ENCODE measurements at regions of chr12 and their contacts with region 1.

Region 1: DNA sequence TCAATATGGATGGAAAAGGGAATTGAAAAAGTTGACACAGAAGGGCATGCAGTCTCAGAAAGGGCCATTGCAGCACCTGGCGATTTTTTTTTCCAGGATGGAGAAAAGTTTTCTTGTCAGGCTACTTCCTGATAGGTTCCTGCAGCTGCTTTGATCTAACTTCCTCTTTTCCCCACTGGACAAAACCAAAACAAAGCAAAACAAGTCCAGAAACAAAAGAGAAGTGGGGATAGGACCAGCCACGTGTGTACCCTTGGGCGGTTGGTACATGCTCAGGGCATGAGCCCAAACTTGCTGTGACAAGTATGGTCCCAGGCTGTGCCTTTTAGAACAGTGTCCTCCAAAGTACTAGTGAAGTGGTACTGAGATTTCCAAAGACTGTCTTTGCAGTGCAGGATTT is 89.8 kb downstream of the CHST11 start:
- DNase-seq: peak; percentile 65
- H3K4me3 ChIP-seq: peak overlapping the region in 2 of 3 experiments; percentile 2 to 3
- H3K27ac ChIP-seq: no peak overlapping the region
- H3K4me1 ChIP-seq: peaks cover 24% of the 10 kb centered on the region
- H3K27me3 ChIP-seq: no peaks in the 10 kb centered on the region
- CTCF ChIP-seq: no peak

Region 2: GRCh38 chr12:104582739-104583138 is 36.2 kb after region 1 on chr12:
- CTCF ChIA-PET with region 1: no interaction called
- dilution Hi-C with region 1: no loop called
- in situ Hi-C with region 1: no loop called
- intact Hi-C with region 1: no loop called
- DNase-seq: no peak
- H3K4me3 ChIP-seq: no peak overlapping the region
- H3K27ac ChIP-seq: no peak overlapping the region
- H3K4me1 ChIP-seq: peaks cover 20% of the 10 kb centered on the region
- H3K27me3 ChIP-seq: no peaks in the 10 kb centered on the region
- CTCF ChIP-seq: no peak

Region 3: DNA sequence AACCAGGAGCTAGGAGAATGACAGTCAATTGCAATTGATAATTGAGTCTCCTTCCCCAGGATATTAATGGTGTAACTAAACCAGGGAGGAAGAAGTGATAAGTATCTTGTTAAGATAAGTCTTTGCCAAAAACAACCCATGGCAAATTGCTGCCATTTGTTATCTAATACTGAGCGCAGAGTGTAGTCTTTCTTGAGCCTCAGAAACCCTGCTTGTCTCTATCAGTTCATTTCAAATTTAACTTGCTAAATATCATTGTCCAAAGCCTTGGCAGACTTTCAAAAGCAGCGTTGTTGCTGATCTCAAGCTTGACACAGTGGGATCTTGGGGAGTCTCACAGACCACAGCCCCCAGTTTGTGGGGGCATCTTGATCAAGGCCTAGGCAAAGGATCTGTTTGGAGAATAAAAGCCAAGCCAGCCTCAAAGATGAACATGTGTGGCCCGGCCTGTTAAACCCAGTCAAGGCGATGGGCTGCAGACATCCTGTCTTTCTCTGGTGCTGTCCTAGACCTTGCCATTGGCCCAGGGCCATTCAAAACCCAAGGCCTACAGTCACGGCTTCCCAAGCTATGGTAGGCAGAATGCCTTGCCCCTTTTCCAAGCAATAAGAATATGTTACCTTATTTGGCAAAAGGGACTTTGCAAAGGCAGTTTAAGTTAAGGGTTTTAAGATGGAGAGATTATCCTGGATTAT is 74.4 kb after region 1 on chr12:
- CTCF ChIA-PET with region 1: no interaction called
- dilution Hi-C with region 1: loop called (anchors 5 kb)
- in situ Hi-C with region 1: no loop called
- intact Hi-C with region 1: no loop called
- DNase-seq: no peak
- H3K4me3 ChIP-seq: no peak overlapping the region
- H3K27ac ChIP-seq: no peak overlapping the region
- H3K4me1 ChIP-seq: peaks cover 2% of the 10 kb centered on the region
- H3K27me3 ChIP-seq: no peaks in the 10 kb centered on the region
- CTCF ChIP-seq: no peak

Region 4: GRCh38 chr12:104699489-104700190 is 153.1 kb after region 1 on chr12:
- CTCF ChIA-PET with region 1: no interaction called
- dilution Hi-C with region 1: no loop called
- in situ Hi-C with region 1: no loop called
- intact Hi-C with region 1: no loop called
- DNase-seq: no peak
- H3K4me3 ChIP-seq: no peak overlapping the region
- H3K27ac ChIP-seq: no peak overlapping the region
- H3K4me1 ChIP-seq: no peaks in the 10 kb centered on the region
- H3K27me3 ChIP-seq: no peaks in the 10 kb centered on the region
- CTCF ChIP-seq: no peak